Posterior vena cava (tissue), 2 donors: ENCODE measurements at regions of chr18 and their contacts with region 1.

Region 1: GRCh38 chr18:76791106-76791505 is 31.3 kb upstream of the ZNF236 start:
- DNase-seq: no peak

Region 2: DNA sequence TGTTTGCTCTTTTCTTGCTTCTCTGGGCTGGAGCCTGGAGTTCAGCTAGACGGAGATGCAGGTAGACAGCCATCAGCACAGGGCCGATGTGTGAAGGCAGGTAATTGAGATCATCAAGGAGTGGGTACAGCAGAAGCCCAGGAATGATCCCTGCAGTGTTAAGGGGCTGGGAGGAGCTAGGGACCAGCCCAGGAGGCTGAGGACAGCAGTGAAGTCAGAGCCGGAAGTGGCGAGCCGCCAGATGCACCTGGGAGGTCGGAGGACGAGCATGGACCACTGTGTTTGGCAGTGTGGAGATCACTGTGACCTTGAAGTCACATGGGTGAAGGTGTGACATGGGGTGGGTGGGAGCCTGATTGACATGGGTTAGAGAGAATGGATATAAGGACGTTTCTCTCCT is 25.0 kb after region 1 on chr18:
- intact Hi-C with region 1: loop called in 1 of 2 experiments (anchors 1 kb)
- DNase-seq: no peak